Ovary (tissue), 10 donors: ENCODE measurements at regions of chr7 and their contacts with region 1.

Region 1: GRCh38 chr7:154652564-154652963 is 350.4 kb downstream of the PAXIP1 start:
- DNase-seq: no peak
- H3K4me3 ChIP-seq: no peak overlapping the region
- H3K27ac ChIP-seq: no peak overlapping the region
- H3K4me1 ChIP-seq: no peaks in the 10 kb centered on the region
- H3K27me3 ChIP-seq: no peaks in the 10 kb centered on the region
- CTCF ChIP-seq: no peak
- EP300 ChIP-seq: no peak
- POLR2A ChIP-seq: no peak

Region 2: DNA sequence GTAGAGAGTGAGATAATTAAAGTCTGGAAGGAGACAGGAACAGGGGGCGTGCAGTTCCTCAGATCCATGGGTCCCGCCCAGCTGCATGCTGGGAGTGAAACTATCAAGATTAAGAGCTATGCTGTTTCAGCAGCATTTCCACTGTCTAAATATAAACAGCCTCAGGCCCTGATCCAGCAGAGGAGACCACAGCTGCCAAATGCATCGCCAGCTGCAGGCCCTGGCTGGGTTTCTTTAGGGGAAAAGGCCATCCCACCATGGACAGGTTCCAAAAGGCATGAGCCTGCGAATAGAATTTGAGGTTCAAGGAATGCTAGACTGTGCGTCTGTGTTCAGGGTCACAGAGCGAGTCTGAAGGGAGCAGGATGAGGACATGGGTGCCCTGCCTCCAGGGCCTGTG is 61.0 kb before region 1 on chr7:
- intact Hi-C with region 1: loop called in 1 of 4 experiments (anchors 10 kb)
- DNase-seq: no peak
- H3K4me3 ChIP-seq: no peak overlapping the region
- H3K27ac ChIP-seq: no peak overlapping the region
- H3K4me1 ChIP-seq: no peaks in the 10 kb centered on the region
- H3K27me3 ChIP-seq: no peaks in the 10 kb centered on the region
- CTCF ChIP-seq: no peak
- EP300 ChIP-seq: no peak
- POLR2A ChIP-seq: no peak

Region 3: DNA sequence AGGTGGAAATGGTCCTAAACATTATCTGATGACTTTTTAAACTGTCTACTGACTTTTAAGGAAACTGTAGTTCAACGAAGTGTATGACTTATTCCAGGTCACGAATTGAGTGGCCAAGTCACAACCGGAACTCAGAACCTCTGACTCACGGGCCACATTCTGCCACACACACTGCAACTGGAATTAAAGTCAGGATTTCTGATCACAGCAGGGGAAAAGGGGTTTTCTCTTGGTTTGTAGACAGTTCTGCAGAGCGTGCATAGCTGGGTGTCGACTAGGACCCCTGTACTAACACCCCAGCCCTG is 625.1 kb after region 1 on chr7:
- intact Hi-C with region 1: no loop called
- DNase-seq: no peak
- H3K4me3 ChIP-seq: no peak overlapping the region
- H3K27ac ChIP-seq: no peak overlapping the region
- H3K4me1 ChIP-seq: no peaks in the 10 kb centered on the region
- H3K27me3 ChIP-seq: no peaks in the 10 kb centered on the region
- CTCF ChIP-seq: no peak
- EP300 ChIP-seq: no peak
- POLR2A ChIP-seq: no peak